Left ventricle myocardium superior (tissue), 1 donor: ENCODE measurements at regions of chr19 and their contacts with region 1.

Region 1: GRCh38 chr19:49443366-49444099 is 2.2 kb upstream of the SLC17A7 start:
- DNase-seq: peak; percentile 96
- ATAC-seq: peak; percentile 87

Region 2: GRCh38 chr19:49391581-49392399 is 51.7 kb before region 1 on chr19:
- intact Hi-C with region 1: loop called (anchors 5 kb)
- DNase-seq: peak; percentile 84
- ATAC-seq: peak; percentile 89